Sciatic nerve (tissue), 2 donors: ENCODE measurements at regions of chr5 and their contacts with region 1.

Region 1: GRCh38 chr5:35771309-35771708 is 85.4 kb upstream of the IL7R start:
- DNase-seq: no peak
- ATAC-seq: no peak

Region 2: GRCh38 chr5:35919191-35919590 is 147.9 kb after region 1 on chr5:
- intact Hi-C with region 1: loop called (anchors 5 kb)
- DNase-seq: no peak
- ATAC-seq: no peak